Astrocyte of the cerebellum (primary cell): ENCODE measurements at regions of chr6 and their contacts with region 1.

Region 1: GRCh38 chr6:72084992-72085569 is 198.7 kb downstream of the RIMS1 start:
- DNase-seq: peak; percentile 23
- H3K4me3 ChIP-seq: no peak overlapping the region
- CTCF ChIP-seq: peak; percentile 5

Region 2: GRCh38 chr6:71349976-71350615 is 735.0 kb before region 1 on chr6:
- in situ Hi-C with region 1: loop called (anchors 25 kb)
- DNase-seq: peak; percentile 54
- H3K4me3 ChIP-seq: no peak overlapping the region
- CTCF ChIP-seq: no peak

Region 3: GRCh38 chr6:71768356-71768755 is 316.7 kb before region 1 on chr6:
- in situ Hi-C with region 1: no loop called
- DNase-seq: no peak
- H3K4me3 ChIP-seq: no peak overlapping the region
- CTCF ChIP-seq: no peak

Region 4: GRCh38 chr6:73435236-73435635 is 1350.2 kb after region 1 on chr6:
- in situ Hi-C with region 1: no loop called
- DNase-seq: no peak
- H3K4me3 ChIP-seq: no peak overlapping the region
- CTCF ChIP-seq: no peak